ENCODE measurements at regions of chr1 and their contacts with region 1.

Region 1: DNA sequence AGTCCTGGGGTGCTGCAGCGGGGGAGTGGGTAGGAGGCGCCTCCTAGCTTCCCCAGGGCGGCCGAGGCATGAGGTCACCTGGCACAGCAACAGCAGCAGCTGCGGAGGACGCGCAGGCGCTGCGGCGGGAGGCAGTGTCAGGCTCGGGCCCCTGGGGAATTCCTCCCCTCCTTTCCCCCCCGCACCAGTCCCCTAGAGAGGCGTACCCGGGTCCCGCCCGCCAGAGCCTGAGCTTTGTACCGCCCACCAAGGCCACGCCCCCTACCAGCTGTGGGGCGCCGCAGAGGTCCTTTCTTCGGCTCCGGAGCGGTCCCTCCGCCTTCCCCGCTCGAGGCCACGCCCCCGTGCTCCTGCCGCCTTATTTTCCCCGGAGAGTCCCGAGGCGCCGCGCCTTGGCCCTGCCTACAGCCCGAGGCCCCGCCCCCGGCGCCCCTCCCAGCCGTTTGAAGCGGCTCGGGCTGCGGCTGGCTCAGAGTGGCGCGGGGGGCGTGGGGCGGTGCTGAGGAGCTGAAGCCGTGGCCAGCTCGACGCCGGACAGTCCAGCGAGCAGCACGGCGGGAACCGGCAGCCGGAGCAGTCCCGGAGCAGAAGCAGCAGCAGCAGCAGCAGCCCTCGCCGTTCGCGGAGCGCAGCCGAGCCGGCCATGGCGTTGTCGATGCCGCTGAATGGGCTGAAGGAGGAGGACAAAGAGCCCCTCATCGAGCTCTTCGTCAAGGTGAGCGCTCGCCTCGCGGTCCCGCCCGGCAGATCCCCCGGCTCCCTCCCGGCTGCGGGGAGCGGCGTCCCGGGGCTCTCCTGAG is at the start of gene CLIC4:
- H3K4me3 ChIP-seq: peak within 1 kb of the TSS; percentile 83
- H3K27ac ChIP-seq: peak within 1 kb of the TSS; percentile 91
- H3K4me1 ChIP-seq: peaks cover 5% of the 10 kb centered on the region; the same call in 1 of the 2 replicates
- CTCF ChIP-seq: peak; percentile 77

Region 2: DNA sequence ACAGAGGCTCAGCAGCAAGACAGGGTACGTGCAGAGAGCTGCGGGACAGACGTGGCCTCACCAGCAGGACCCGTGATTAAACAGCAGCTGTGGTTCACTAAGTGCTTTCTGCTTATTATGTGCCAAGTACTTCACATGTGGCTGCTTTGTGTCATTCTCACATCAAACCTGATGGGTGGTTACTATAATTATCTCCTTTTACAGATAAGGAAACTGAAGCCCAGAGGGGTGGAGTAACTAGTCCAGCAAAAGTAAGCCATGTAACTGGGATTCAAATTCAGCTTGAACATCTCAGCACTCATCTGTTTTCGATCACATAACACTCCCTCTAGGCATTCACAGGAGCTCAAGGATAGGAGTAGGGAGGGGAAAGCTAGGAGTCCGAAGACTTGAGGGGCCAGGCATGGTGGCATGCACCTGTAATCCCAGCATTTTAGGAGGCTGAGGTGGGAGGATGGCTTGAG is 50.7 kb before region 1 on chr1:
- CTCF ChIA-PET with region 1: interaction called, 26 read pairs
- POLR2A ChIA-PET with region 1: interaction called, 28 read pairs
- H3K4me3 ChIP-seq: no peak overlapping the region
- H3K27ac ChIP-seq: no peak overlapping the region
- H3K4me1 ChIP-seq: 0 out of 2 replicates have a peak, but pooled peaks cover 3% of the 10 kb centered on the region
- CTCF ChIP-seq: no peak

Region 3: GRCh38 chr1:24727501-24728216 is 17.5 kb before region 1 on chr1:
- CTCF ChIA-PET with region 1: interaction called, 9 read pairs
- POLR2A ChIA-PET with region 1: interaction called, 19 read pairs
- H3K4me3 ChIP-seq: no peak overlapping the region
- H3K27ac ChIP-seq: no peak overlapping the region
- H3K4me1 ChIP-seq: peaks cover 4% of the 10 kb centered on the region
- CTCF ChIP-seq: no peak

Region 4: DNA sequence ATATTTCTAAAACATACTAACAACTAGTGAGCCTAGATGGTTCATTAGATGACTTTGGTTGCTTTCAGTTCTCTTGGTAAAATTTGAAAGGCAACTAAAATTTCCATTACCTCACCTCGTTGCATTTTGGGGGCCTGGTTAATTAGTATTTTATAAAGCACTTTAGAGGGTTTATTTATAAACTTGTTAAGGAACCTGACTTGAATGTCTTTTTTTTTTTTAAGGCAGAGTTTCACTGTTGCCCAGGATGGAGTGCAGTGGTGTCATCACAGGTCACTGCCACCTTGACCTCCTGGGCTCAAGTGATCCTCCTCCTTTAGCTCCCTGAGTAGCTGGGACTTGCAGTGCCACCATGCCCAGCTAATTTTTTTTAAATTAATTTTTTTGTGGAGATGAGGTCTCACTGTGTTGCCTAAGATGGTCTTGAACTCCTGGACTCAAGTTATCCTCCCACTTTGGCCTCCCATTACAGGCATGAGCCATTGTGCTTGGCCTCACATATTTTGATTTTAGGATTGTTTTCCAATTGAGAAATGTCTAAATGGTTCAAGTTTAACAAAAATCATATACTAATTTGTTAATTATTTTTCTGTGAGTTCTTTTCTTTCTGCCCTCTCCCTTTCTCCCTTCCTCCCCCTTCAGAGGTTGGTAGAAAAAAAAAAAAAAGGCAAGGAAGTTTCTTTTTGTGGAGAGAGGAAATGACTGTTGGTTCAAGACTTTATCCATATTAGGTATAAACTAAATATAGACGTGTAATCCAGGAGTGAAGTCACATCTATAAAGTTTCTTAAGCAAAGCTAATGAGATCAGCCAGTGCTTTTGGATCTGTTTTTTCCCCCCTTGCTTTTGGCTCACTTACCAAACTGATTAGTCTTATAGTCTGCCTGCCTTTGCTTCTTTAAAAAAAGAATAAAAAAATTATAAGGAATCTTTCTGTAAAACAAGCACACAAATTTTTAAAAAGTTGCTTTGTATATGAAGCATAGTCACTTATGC is 24.8 kb after region 1 on chr1:
- CTCF ChIA-PET with region 1: no interaction called
- POLR2A ChIA-PET with region 1: interaction called, 21 read pairs
- H3K4me3 ChIP-seq: no peak overlapping the region
- H3K27ac ChIP-seq: peak overlapping the region; percentile 57
- H3K4me1 ChIP-seq: peaks cover 19% of the 10 kb centered on the region
- CTCF ChIP-seq: no peak